HCT116 (cell line): ENCODE measurements at regions of chr21 and their contacts with region 1.

Region 1: GRCh38 chr21:46210378-46211136 is 18.0 kb downstream of the LSS start:
- DNase-seq: no peak
- ATAC-seq: 0 out of 2 replicates have a peak, but pooled peaks have one; percentile 49
- H3K4me3 ChIP-seq: no peak overlapping the region
- H3K27ac ChIP-seq: no peak overlapping the region
- H3K4me1 ChIP-seq: no peaks in the 10 kb centered on the region
- H3K27me3 ChIP-seq: no peaks in the 10 kb centered on the region
- CTCF ChIP-seq: peak in 2 of 3 experiments; percentile 11 to 30; a peak in 2 of 6 replicates
- POLR2A ChIP-seq: no peak
- RAD21 ChIP-seq: no peak; the same call in 1 of the 2 replicates

Region 2: DNA sequence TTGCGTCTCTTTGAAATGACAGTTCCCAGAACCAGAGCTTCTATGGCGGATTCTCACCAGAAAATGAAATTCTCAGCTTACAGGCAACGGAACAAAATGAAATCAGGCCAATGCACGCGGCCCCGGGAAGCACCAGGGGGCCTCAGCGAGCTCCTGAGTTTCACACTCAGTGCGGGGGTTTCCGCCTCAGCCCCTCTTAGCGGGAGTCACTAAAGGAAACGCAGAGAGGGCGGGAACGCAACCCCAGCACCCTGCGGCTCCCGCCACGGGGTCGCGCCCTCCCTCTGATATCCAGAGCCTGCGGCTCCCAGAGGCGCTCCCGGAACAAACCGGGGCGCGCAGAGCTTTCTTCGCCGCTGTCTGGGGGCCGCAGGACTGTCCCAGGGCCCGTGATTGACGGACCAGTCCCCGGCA is 236.9 kb before region 1 on chr21:
- CTCF ChIA-PET with region 1: no interaction called
- POLR2A ChIA-PET with region 1: no interaction called
- RAD21 ChIA-PET with region 1: no interaction called
- intact Hi-C with region 1: loop called (anchors 5 kb)
- DNase-seq: peak; percentile 35
- ATAC-seq: peak; percentile 52
- H3K4me3 ChIP-seq: peak overlapping the region; percentile 47 to 60
- H3K27ac ChIP-seq: peak overlapping the region; percentile 93
- H3K4me1 ChIP-seq: peaks cover 23 to 37% of the 10 kb centered on the region in 2 experiments
- H3K27me3 ChIP-seq: no peaks in the 10 kb centered on the region
- CTCF ChIP-seq: peak in 2 of 3 experiments; percentile 70 to 76; a peak in 4 of 6 replicates
- POLR2A ChIP-seq: no peak
- RAD21 ChIP-seq: no peak